ENCODE measurements at regions of chr5 and their contacts with region 1.

Region 1: DNA sequence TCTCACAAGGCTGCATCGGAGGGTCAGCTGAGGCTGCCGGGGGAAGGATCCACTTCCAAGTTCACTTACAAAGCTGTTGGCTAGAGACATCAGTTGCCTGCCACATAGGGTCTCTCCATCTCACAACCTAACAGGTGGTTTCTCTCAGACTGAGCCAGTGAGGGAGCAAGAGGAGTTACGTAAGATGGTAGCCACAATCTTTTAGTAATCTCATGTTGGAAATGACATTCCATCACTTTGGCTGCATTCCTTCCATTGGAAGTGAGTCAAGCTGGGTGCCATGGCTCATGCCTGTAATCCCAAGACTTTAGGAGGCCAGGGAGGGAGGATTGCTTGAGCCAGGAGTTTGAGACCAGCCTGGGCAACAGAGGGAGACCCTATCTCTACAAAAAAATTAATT is 7.4 kb upstream of the GRK6 start:
- DNase-seq: no peak
- ATAC-seq: no peak
- H3K4me3 ChIP-seq: no peak overlapping the region
- H3K4me3 Mint-ChIP-seq: no peak overlapping the region
- H3K27ac ChIP-seq: no peak overlapping the region
- H3K27ac Mint-ChIP-seq: no peak overlapping the region
- H3K4me1 ChIP-seq: no peaks in the 10 kb centered on the region
- H3K4me1 Mint-ChIP-seq: no peaks in the 10 kb centered on the region
- H3K27me3 ChIP-seq: no peaks in the 10 kb centered on the region
- H3K27me3 Mint-ChIP-seq: no peaks in the 10 kb centered on the region
- CTCF ChIP-seq: no peak

Region 2: DNA sequence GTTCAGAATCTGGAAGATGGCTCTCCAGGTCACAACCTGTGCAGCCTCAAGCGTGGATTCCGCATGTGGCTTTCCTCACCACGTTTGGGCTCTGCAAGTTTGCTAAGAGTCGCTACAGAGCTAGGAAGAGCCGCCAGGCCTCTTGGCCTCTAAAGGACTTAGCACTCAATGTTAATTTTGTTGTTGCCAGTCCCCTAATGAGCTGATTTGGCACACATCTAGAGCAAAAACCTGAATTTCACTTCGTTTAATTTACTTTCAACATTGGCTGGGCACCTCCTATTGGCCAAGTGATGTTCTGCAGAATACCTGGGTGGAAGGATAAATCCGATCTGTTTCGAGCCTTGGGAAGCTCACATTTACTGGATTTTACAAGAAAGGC is 674.5 kb before region 1 on chr5:
- CTCF ChIA-PET with region 1: no interaction called
- POLR2A ChIA-PET with region 1: no interaction called
- intact Hi-C with region 1: no loop called
- DNase-seq: no peak
- ATAC-seq: no peak
- H3K4me3 ChIP-seq: no peak overlapping the region
- H3K4me3 Mint-ChIP-seq: no peak overlapping the region
- H3K27ac ChIP-seq: no peak overlapping the region
- H3K27ac Mint-ChIP-seq: no peak overlapping the region
- H3K4me1 ChIP-seq: peaks cover 27% of the 10 kb centered on the region in 2 donors
- H3K4me1 Mint-ChIP-seq: peaks cover 19% of the 10 kb centered on the region
- H3K27me3 ChIP-seq: peaks cover 0 to 84% (median 34%) of the 10 kb centered on the region in 4 experiments
- H3K27me3 Mint-ChIP-seq: peaks cover 67% of the 10 kb centered on the region
- CTCF ChIP-seq: no peak

Region 3: DNA sequence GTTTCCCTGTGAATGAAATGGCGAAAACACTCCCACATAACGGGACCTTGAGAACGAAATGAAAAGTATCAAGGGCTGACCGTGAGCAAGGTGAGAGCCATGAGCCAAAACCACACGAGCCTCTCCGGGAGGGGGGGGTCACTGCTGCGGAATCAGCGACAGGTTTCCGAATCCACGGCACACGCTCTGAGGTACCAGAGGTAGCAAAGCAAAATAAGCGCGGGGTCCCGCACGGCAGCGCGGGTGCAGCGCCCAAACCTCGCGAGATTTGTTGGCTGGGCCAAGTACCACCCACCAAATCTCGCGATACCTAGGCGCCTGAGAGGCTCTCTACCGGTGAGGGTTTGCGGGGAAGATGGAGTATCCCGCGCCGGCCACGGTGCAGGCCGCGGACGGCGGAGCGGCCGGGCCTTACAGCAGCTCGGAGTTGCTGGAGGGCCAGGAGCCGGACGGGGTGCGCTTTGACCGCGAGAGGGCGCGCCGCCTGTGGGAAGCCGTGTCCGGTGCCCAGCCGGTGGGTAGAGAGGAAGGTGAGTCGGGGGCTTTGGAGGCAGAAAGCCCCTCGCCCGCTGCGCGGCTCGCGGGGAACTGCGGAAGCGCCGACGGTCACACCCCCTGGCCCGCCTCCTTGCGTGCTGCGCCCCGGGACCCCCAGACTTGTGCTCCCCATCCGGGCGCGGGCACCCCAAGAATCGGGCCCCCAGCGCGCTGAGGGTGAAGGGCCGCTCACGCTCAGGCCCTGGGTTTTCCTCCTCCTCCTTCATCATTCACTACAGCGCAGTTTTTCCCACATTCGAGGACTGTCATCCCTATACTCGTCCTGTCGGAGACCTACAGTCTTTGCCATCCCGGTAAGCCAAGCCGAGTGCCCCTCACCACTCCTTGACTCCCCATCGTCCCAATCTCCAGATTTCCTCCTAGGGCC is 396.4 kb before region 1 on chr5 and contains the start of gene ZNF346:
- CTCF ChIA-PET with region 1: no interaction called
- POLR2A ChIA-PET with region 1: no interaction called
- intact Hi-C with region 1: no loop called
- DNase-seq: peak; percentile 95
- ATAC-seq: peak; percentile 98
- H3K4me3 ChIP-seq: peak within 1 kb of the TSS; percentile 69 to 96 (median 96)
- H3K4me3 Mint-ChIP-seq: peak within 1 kb of the TSS; percentile 98
- H3K27ac ChIP-seq: peak within 1 kb of the TSS; percentile 66 to 92
- H3K27ac Mint-ChIP-seq: peak within 1 kb of the TSS; percentile 96
- H3K4me1 ChIP-seq: peaks cover 15 to 17% of the 10 kb centered on the region in 2 donors
- H3K4me1 Mint-ChIP-seq: peaks cover 38% of the 10 kb centered on the region
- H3K27me3 ChIP-seq: no peaks in the 10 kb centered on the region
- H3K27me3 Mint-ChIP-seq: no peaks in the 10 kb centered on the region
- CTCF ChIP-seq: peak; percentile 44
- total RNA-seq, gene ZNF346: 38.4 and 47.1 TPM in 2 replicates

Region 4: DNA sequence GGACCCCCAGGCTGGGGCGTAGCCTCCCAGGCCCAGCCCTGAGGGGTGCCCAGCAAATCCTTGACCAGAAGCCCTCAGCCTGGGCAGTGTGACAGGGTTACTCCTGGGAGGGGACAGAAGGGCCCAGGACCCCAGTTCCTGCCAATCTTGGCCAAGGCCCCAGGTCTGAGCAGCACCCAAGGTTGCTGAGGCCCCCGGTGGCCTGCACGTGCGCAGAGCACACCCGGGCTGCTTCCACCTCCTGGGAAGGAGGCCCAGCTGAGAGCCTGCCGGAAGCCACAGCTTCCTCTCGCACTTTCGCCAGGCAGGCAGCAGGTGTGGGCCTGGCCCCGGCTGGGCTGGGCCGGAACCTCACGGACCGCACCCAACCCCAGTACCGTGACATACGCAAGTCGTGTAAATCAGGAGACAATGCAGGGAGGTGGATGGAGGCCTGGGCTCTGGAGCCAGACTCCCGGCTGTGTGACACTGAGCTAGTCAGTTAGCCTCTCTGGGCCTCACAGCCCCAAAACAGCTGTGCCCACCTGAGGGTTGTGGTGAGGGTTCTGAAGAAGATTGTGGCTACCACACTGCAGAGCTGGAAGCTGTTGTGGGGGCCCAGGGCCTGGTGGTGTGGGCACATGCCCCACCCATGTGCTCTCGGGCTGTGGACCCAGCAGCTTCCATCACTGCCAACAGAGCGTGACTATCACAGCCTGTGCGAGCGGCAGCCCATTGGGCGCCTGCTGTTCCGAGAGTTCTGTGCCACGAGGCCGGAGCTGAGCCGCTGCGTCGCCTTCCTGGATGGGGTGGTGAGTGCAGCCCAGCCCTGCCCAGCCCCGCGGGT is 12.5 kb after region 1 on chr5:
- CTCF ChIA-PET with region 1: interaction called, 15 read pairs
- POLR2A ChIA-PET with region 1: no interaction called
- intact Hi-C with region 1: no loop called
- DNase-seq: peak; percentile 95
- ATAC-seq: peak; percentile 61
- H3K4me3 ChIP-seq: peak overlapping the region in 4 of 5 experiments; percentile 29 to 35 (median 32)
- H3K4me3 Mint-ChIP-seq: peak overlapping the region; percentile 94
- H3K27ac ChIP-seq: peak overlapping the region; percentile 92 to 96
- H3K27ac Mint-ChIP-seq: peak overlapping the region; percentile 97
- H3K4me1 ChIP-seq: peaks cover 63 to 83% of the 10 kb centered on the region in 2 donors
- H3K4me1 Mint-ChIP-seq: peaks cover 65% of the 10 kb centered on the region
- H3K27me3 ChIP-seq: no peaks in the 10 kb centered on the region
- H3K27me3 Mint-ChIP-seq: no peaks in the 10 kb centered on the region
- CTCF ChIP-seq: no peak

Region 5: DNA sequence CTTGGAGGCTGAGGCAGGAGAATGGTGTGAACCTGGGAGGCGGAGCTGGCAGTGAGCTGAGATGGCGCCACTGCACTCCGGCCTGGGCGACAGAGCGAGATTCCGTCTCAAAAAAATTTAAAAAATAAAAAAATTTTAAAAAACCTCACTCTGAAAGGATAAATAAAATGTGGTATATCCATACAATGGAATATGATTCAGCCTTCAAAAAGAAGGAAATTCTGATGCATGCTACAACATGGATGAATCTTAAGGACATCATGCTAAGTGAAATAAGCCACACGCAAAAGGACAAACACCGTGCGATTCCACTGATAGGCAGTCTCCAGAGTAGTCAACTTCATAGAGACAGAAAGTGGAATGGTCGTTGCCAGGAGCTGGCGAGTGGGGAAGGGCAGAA is 46.0 kb after region 1 on chr5:
- CTCF ChIA-PET with region 1: no interaction called
- POLR2A ChIA-PET with region 1: no interaction called
- intact Hi-C with region 1: no loop called
- DNase-seq: no peak
- ATAC-seq: no peak
- H3K4me3 ChIP-seq: no peak overlapping the region
- H3K4me3 Mint-ChIP-seq: no peak overlapping the region
- H3K27ac ChIP-seq: no peak overlapping the region
- H3K27ac Mint-ChIP-seq: peak overlapping the region; percentile 20
- H3K4me1 ChIP-seq: no peaks in the 10 kb centered on the region
- H3K4me1 Mint-ChIP-seq: no peaks in the 10 kb centered on the region
- H3K27me3 ChIP-seq: no peaks in the 10 kb centered on the region
- H3K27me3 Mint-ChIP-seq: no peaks in the 10 kb centered on the region
- CTCF ChIP-seq: no peak

Measured in B cell (primary cell).